Activated CD8-positive, alpha-beta T cell treated with anti-CD3 and anti-CD28 coated beads for 36 hours (primary cell): ENCODE measurements at regions of chr1 and their contacts with region 1.

Region 1: GRCh38 chr1:9145021-9145668 is 16.2 kb upstream of the GPR157 start:
- DNase-seq: peak; percentile 26
- ATAC-seq: no peak
- H3K4me3 Mint-ChIP-seq: no peak overlapping the region
- H3K27ac Mint-ChIP-seq: no peak overlapping the region
- H3K4me1 Mint-ChIP-seq: no peaks in the 10 kb centered on the region
- H3K27me3 Mint-ChIP-seq: no peaks in the 10 kb centered on the region
- CTCF ChIP-seq: no peak

Region 2: GRCh38 chr1:9129266-9130041 is 15.7 kb before region 1 on chr1:
- CTCF ChIA-PET with region 1: interaction called, 23 read pairs
- POLR2A ChIA-PET with region 1: interaction called, 4 read pairs
- intact Hi-C with region 1: no loop called
- DNase-seq: peak; percentile 89
- ATAC-seq: peak; percentile 67
- H3K4me3 Mint-ChIP-seq: peak overlapping the region; percentile 54
- H3K27ac Mint-ChIP-seq: no peak overlapping the region
- H3K4me1 Mint-ChIP-seq: peaks cover 38% of the 10 kb centered on the region
- H3K27me3 Mint-ChIP-seq: peaks cover 2% of the 10 kb centered on the region
- CTCF ChIP-seq: no peak

Region 3: DNA sequence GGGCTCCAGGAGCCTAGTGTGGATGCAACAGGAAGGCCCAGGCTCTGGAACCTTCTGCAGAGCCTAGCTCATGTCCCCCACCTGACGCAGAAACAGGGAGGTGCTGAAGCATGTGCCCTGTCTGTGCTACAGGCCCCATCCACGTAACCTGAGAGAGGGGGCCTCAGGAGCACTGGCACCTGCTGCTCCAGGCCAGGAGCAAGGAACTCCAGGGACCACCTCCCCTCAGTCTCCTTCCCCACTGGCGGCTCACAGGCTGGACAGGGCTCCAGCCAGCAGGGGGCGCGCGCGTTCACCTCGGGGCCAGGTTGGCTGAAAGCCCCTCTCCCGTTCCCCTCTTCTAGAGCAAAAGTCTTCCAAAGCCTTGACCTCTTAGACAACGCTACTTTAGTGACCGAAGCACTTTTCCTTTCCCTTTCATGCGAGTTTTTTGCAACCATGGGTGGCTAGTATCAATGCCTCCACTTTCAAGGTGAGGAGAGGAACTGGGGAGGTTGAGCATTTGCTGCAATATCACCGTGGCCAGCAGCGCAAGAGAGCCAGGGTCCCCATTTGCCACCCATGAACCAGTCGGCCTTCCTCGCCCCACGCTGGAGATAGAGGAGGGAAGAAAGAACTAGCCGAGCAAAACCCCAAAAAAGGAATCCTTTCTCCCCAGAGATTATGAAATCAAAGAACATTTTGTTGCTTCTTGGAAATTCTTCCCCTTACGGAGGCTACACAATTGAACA is 36.2 kb after region 1 on chr1:
- CTCF ChIA-PET with region 1: interaction called, 16 read pairs
- POLR2A ChIA-PET with region 1: no interaction called
- intact Hi-C with region 1: no loop called
- DNase-seq: peak; percentile 74
- ATAC-seq: peak; percentile 67
- H3K4me3 Mint-ChIP-seq: peak overlapping the region; percentile 70
- H3K27ac Mint-ChIP-seq: peak overlapping the region; percentile 66
- H3K4me1 Mint-ChIP-seq: peaks cover 6% of the 10 kb centered on the region
- H3K27me3 Mint-ChIP-seq: peaks cover 32% of the 10 kb centered on the region
- CTCF ChIP-seq: peak; percentile 94